ENCODE measurements at regions of chr7 and their contacts with region 1.

Region 1: GRCh38 chr7:106064771-106065585 is 47.1 kb downstream of the SYPL1 start:
- DNase-seq: peak; percentile 97
- H3K4me3 ChIP-seq: peak overlapping the region in 3 of 4 donors; percentile 22 to 33 (median 30)
- H3K27ac ChIP-seq: peak overlapping the region; percentile 88 to 90 (median 88)
- H3K4me1 ChIP-seq: peaks cover 0 to 93% (median 71%) of the 10 kb centered on the region in 4 donors
- H3K27me3 ChIP-seq: no peaks in the 10 kb centered on the region
- CTCF ChIP-seq: no peak
- EP300 ChIP-seq: peak in 1 of 4 donors; percentile 37
- POLR2A ChIP-seq: no peak

Region 2: GRCh38 chr7:105046414-105046813 is 1018.6 kb before region 1 on chr7:
- intact Hi-C with region 1: no loop called
- DNase-seq: no peak
- H3K4me3 ChIP-seq: no peak overlapping the region
- H3K27ac ChIP-seq: peak overlapping the region in 2 of 4 donors; percentile 11 to 27
- H3K4me1 ChIP-seq: peaks cover 0 to 44% (median 33%) of the 10 kb centered on the region in 4 donors
- H3K27me3 ChIP-seq: no peaks in the 10 kb centered on the region
- CTCF ChIP-seq: no peak
- EP300 ChIP-seq: no peak
- POLR2A ChIP-seq: no peak

Region 3: DNA sequence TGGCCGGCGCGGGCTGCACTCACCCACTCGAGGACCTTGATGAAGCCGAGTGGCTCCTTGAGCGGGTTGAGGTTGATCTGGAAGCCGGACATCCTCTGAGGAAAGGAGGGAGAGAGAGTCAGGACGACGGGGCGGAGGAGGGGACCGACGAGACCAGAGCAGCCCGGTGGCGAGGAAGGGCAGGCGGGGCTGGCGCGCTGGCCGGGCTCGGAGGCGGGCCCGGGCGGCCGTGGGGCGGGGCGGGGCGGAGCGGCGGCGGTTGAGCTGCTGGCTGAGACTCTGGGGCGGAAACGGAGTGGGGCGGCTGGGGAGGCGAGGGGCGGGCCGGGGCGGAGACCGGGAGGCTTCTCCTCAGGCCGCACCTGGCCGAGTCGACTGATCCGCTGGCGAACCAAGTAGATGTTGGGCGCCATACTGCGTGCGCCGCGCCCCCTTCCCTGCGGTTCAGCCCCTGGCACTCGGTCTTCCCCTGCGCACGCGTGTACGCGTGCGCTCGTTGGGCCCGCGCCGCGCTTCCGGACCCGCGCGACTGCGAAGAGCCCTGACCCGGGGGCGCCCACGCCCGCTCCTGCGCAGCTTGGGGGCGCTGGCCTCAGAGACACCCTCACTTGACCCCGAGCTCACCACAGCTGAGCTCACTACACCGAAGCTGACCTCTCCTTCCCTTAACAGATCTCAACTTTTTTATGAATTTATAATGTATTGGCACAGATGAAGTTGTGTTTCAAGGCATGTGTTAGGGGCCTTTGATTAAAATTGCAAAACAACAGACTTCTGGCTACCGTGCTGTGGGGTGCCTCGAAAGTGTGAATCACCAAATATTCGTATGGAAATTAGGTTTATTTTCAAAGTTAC is 47.4 kb after region 1 on chr7 and contains the start of gene SYPL1:
- intact Hi-C with region 1: loop called (anchors 2 kb)
- DNase-seq: peak; percentile 98
- H3K4me3 ChIP-seq: peak within 1 kb of the TSS; percentile 62 to 81 (median 73)
- H3K27ac ChIP-seq: peak within 1 kb of the TSS; percentile 95 to 100 (median 96)
- H3K4me1 ChIP-seq: peaks cover 0 to 68% (median 50%) of the 10 kb centered on the region in 4 donors
- H3K27me3 ChIP-seq: no peaks in the 10 kb centered on the region
- CTCF ChIP-seq: no peak
- EP300 ChIP-seq: no peak
- POLR2A ChIP-seq: peak in 1 of 2 donors; percentile 38
- total RNA-seq, gene SYPL1: 99.5 to 184 (median 144) TPM

Region 4: GRCh38 chr7:106128836-106129235 is 63.9 kb after region 1 on chr7:
- intact Hi-C with region 1: no loop called
- DNase-seq: no peak
- H3K4me3 ChIP-seq: no peak overlapping the region
- H3K27ac ChIP-seq: no peak overlapping the region
- H3K4me1 ChIP-seq: peaks cover 0 to 49% (median 31%) of the 10 kb centered on the region in 4 donors
- H3K27me3 ChIP-seq: no peaks in the 10 kb centered on the region
- CTCF ChIP-seq: no peak
- EP300 ChIP-seq: no peak
- POLR2A ChIP-seq: no peak

Region 5: DNA sequence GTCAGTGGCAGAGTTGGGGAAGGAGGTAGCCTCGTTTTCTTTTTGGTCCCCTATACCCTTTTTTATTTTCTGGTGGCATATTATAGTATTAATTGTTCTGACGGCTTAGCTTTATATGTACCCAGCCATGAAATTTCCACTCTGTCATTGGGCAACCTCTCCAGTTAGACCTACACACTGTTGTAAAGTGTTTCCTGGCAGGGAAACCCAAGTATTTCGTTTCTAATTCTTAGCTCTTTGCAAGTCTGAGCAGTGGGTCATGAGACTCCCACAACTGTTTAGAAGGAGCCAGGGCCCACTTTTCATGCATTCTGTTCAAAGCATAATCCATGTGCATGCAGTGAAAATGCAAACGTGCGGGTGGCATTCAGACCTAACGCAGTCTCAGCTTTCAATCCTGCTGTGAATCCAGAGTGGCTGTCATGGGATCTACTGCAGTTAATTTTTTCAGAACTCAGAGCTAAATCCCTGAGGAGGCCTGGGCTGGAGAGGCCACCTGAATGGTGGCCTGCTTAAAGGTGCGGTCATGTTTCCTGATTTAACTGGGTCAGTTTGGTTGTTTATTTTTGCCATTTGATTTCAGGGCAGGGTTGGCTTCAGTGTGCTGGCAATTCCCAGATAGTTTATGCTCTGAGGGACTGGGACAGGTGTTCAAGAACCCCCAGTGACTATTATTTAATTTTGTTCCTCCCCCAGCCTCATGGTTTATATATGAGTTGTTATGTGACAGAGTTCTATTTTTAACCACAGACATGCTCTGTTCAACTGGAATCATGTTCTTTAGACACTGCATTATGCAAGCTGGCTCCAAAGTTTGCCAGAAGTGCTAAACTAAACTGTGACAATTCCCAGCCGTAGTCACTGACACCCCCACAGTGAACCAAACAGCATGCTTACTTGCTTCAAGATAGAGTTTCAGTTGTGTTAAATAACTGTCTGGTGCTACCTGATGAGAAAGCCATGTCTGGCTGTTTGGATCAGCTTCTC is 74.6 kb after region 1 on chr7:
- intact Hi-C with region 1: loop called (anchors 1 kb)
- DNase-seq: peak; percentile 92
- H3K4me3 ChIP-seq: no peak overlapping the region
- H3K27ac ChIP-seq: peak overlapping the region; percentile 68 to 89 (median 82)
- H3K4me1 ChIP-seq: peaks cover 0 to 26% (median 25%) of the 10 kb centered on the region in 4 donors
- H3K27me3 ChIP-seq: no peaks in the 10 kb centered on the region
- CTCF ChIP-seq: no peak
- EP300 ChIP-seq: peak; percentile 73 to 93 (median 82)
- POLR2A ChIP-seq: no peak

Measured in sigmoid colon (tissue), 7 donors.